ENCODE measurements at regions of chr20 and their contacts with region 1.

Region 1: DNA sequence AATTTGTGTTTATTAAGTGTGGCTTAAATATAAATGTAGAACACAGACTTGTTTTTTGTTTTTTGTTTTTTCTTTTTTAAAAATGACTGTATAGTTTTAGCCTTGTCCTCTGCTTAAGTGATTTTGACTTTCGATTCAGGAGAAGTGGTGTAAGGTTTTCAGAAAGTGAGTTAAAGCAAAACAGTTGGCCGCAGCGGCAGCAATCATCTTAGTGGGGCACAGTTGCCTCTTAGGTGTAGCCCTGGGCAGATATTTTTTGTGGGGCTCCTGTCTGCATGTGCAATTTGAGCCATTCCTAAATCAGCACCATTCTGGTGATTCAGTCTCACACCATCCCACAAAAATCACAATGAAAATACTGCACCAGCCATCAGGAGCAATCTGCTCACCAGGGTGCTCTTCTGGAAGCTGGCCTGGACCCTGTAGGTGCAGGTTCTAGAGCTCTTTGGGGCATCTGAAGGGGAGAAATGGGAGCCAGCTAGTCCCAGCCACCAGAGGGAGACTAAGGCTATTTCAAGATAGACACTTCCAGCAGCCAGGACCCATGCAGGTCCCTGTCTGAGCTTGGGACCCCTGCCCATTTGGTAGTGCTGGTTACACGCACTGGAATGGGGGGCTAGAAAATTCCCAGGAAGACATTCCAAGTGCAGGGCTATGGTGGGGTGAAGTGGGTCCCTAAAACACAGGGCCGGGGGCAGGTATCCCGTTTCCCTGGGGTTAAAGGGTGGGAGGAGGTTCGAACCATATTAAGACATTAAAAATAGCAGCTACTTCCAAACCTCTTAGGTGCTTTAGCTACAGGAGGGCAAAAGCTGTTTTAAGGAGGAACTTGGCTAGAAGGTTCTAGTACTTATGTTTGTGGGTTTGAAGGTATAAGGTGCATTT is 156.6 kb downstream of the NFATC2 start:
- DNase-seq: peak; percentile 77
- H3K4me3 Mint-ChIP-seq: no peak overlapping the region
- H3K27ac Mint-ChIP-seq: peak overlapping the region; percentile 81
- H3K4me1 Mint-ChIP-seq: peaks cover 67% of the 10 kb centered on the region
- H3K27me3 Mint-ChIP-seq: no peaks in the 10 kb centered on the region

Region 2: GRCh38 chr20:51258582-51259180 is 127.2 kb before region 1 on chr20:
- intact Hi-C with region 1: no loop called
- DNase-seq: no peak
- H3K4me3 Mint-ChIP-seq: no peak overlapping the region
- H3K27ac Mint-ChIP-seq: no peak overlapping the region
- H3K4me1 Mint-ChIP-seq: no peaks in the 10 kb centered on the region
- H3K27me3 Mint-ChIP-seq: peaks cover 7% of the 10 kb centered on the region

Region 3: GRCh38 chr20:51399006-51399871 is 13.4 kb after region 1 on chr20:
- intact Hi-C with region 1: loop called (anchors 1 kb)
- DNase-seq: no peak
- H3K4me3 Mint-ChIP-seq: peak overlapping the region; percentile 80
- H3K27ac Mint-ChIP-seq: peak overlapping the region; percentile 97
- H3K4me1 Mint-ChIP-seq: peaks cover 73% of the 10 kb centered on the region
- H3K27me3 Mint-ChIP-seq: no peaks in the 10 kb centered on the region

Region 4: GRCh38 chr20:51404298-51405060 is 18.6 kb after region 1 on chr20:
- intact Hi-C with region 1: loop called (anchors 1 kb)
- DNase-seq: peak; percentile 94
- H3K4me3 Mint-ChIP-seq: peak overlapping the region; percentile 75
- H3K27ac Mint-ChIP-seq: peak overlapping the region; percentile 97
- H3K4me1 Mint-ChIP-seq: peaks cover 81% of the 10 kb centered on the region
- H3K27me3 Mint-ChIP-seq: no peaks in the 10 kb centered on the region

Region 5: GRCh38 chr20:51423290-51423667 is 37.4 kb after region 1 on chr20:
- intact Hi-C with region 1: loop called (anchors 5 kb)
- DNase-seq: no peak
- H3K4me3 Mint-ChIP-seq: no peak overlapping the region
- H3K27ac Mint-ChIP-seq: peak overlapping the region; percentile 59
- H3K4me1 Mint-ChIP-seq: peaks cover 43% of the 10 kb centered on the region
- H3K27me3 Mint-ChIP-seq: no peaks in the 10 kb centered on the region

Region 6: DNA sequence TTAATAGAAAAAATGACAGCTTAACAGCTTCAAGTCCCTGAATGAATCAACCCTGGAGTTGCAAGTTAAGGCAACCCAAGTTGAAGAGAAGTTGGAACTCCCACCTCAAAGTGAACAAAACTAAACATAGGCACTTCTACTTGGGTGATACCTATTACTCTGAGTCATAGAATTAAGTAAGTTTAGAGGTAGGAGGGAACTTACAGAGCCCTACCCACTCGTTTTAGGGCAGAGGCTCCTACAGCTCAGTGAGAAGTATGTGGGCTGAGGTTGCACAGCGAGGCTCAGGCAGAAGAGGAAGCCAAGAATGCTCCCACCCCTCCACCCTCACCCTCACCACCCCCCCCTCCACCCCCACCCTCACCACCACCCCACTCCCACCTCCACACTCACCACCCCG is 114.4 kb after region 1 on chr20:
- intact Hi-C with region 1: loop called (anchors 5 kb)
- DNase-seq: peak; percentile 85
- H3K4me3 Mint-ChIP-seq: peak overlapping the region; percentile 27
- H3K27ac Mint-ChIP-seq: peak overlapping the region; percentile 85
- H3K4me1 Mint-ChIP-seq: peaks cover 72% of the 10 kb centered on the region
- H3K27me3 Mint-ChIP-seq: no peaks in the 10 kb centered on the region

Region 7: GRCh38 chr20:51525241-51526129 is 139.6 kb after region 1 on chr20:
- intact Hi-C with region 1: loop called (anchors 5 kb)
- DNase-seq: peak; percentile 80
- H3K4me3 Mint-ChIP-seq: peak overlapping the region; percentile 82
- H3K27ac Mint-ChIP-seq: peak overlapping the region; percentile 94
- H3K4me1 Mint-ChIP-seq: peaks cover 57% of the 10 kb centered on the region
- H3K27me3 Mint-ChIP-seq: no peaks in the 10 kb centered on the region

Region 8: DNA sequence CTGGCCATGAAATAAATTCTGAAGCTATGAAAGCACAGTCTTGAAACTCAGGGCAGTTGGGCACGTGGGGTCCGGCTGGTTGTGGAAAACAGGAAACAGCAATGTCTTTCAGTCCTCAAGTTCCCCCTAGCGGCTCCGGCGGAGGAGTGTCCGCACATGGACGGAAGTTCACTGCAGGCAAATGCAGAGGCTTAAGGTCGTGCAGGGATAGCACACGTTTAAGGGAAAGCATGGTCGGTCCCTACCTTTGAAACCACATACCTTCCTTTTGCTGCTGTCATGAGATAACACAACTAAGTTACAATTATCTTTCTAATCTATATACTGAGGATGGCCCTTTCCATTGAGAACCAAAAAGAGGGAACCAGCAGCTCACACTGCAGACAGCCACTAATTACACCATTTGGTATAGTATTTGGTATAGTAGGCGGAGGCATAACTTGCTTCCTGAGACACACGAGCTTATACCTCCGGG is 209.2 kb after region 1 on chr20:
- intact Hi-C with region 1: loop called (anchors 1 kb)
- DNase-seq: peak; percentile 93
- H3K4me3 Mint-ChIP-seq: peak overlapping the region; percentile 58
- H3K27ac Mint-ChIP-seq: peak overlapping the region; percentile 63
- H3K4me1 Mint-ChIP-seq: peaks cover 43% of the 10 kb centered on the region
- H3K27me3 Mint-ChIP-seq: peaks cover 2% of the 10 kb centered on the region

Measured in activated CD4-positive, alpha-beta T cell treated with anti-CD3 and anti-CD28 coated beads, Interleukin-2, amount 10 ng/mL, durations not matched to agents 24 days and 14 days (primary cell).